Caco-2 (cell line): ENCODE measurements at regions of chr17 and their contacts with region 1.

Region 1: DNA sequence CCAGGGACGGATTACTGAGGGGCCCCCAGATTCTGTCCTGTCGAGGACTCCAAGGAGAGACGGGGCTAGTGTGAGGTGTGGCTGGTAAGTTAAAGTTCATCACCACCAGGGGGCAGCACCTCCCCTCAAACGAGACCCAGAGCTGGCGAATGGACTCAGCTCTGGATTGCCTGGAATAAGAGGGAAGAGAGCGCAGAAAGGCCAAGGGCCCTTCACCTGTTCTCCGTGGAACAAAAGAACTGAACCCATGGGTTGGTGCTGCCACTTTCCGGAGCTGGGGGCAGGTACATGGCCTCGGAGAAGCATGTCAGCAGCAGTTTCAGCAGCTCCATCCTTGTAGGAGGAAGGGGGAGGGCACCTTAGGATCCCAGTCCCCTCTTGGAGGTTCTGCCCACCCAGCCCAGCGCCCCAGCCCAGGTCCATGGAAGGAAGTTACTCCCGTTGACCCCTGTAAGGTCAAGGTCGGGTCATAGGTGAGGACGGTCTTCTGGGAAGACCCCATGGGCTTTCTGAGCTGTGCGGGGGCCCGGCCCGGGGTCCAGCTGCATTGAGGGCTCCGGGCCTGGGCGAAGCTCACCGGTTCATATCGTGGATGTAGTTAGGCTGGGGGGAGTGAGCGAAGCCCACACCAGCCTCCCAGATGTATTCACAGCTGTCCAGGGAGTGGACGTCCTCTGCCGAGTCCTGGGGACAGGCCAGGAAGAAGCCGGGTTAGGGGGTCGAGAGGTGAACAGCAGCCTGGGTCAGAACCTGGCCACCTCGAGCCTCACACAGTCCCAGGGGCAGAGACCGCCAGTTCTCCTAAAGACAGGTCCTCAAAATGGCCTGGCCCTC is 10.7 kb downstream of the HID1 start:
- DNase-seq: peak; percentile 90 to 93
- H3K4me3 ChIP-seq: no peak overlapping the region
- H3K4me3 Mint-ChIP-seq: no peak overlapping the region
- H3K27ac Mint-ChIP-seq: no peak overlapping the region
- H3K4me1 ChIP-seq: 0 out of 2 replicates have a peak, but pooled peaks cover 3% of the 10 kb centered on the region
- H3K4me1 Mint-ChIP-seq: peaks cover 21% of the 10 kb centered on the region
- H3K27me3 ChIP-seq: no peaks in the 10 kb centered on the region
- H3K27me3 Mint-ChIP-seq: no peaks in the 10 kb centered on the region
- CTCF ChIP-seq: peak; percentile 70 to 86

Region 2: DNA sequence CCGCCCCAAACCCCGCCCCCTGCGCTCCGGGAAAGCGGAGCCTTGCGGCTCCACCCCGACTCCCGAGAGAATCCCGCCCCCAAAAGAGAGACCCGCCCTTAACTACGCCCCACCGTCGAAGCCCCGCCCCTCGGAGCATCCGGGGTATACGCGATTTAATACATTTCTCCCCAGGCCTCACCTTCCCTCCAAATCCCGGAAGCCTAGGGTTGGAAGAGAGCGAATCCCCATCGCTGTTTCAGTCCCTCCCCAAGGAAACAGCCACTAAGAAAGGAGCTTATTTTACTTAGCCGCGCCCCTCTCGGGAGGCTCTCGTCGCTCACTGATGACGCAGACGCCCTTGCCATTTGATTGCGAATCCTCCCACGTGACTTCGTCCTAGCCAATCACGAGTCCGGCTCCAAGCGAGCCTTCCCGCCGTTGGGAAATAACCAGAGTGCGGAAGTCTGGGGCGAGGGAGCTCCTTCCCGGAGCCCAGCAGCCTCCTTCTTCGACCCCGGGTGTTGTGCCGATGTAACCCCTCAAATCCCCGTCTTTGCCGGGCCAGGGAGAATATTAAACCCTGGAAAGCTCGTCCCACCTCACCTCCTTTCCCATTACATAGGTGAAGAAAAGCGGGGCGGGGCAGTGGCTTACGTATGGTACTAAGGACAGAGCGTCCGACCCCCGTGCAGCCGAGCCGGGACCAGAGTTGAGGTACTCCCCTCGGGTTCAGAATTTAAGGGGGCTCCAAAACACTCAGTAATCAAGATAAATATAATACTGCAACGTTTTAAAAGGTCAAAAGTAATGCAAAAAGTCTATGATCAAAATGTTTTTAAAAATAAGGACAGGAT is 88.6 kb before region 1 on chr17:
- CTCF ChIA-PET with region 1: interaction called, 27 read pairs
- POLR2A ChIA-PET with region 1: interaction called, 5 read pairs
- intact Hi-C with region 1: no loop called
- DNase-seq: peak; percentile 99 to 100
- H3K4me3 ChIP-seq: peak overlapping the region; percentile 83
- H3K4me3 Mint-ChIP-seq: peak overlapping the region; percentile 84
- H3K27ac Mint-ChIP-seq: peak overlapping the region; percentile 55
- H3K4me1 ChIP-seq: peaks cover 12% of the 10 kb centered on the region
- H3K4me1 Mint-ChIP-seq: peaks cover 21% of the 10 kb centered on the region
- H3K27me3 ChIP-seq: no peaks in the 10 kb centered on the region
- H3K27me3 Mint-ChIP-seq: no peaks in the 10 kb centered on the region
- CTCF ChIP-seq: no peak

Region 3: GRCh38 chr17:74950207-74950606 is 11.7 kb before region 1 on chr17:
- CTCF ChIA-PET with region 1: interaction called, 16 read pairs
- POLR2A ChIA-PET with region 1: interaction called, 3 read pairs
- intact Hi-C with region 1: no loop called
- DNase-seq: peak; percentile 28 to 49
- H3K4me3 ChIP-seq: no peak overlapping the region
- H3K4me3 Mint-ChIP-seq: no peak overlapping the region
- H3K27ac Mint-ChIP-seq: no peak overlapping the region
- H3K4me1 ChIP-seq: peaks cover 8% of the 10 kb centered on the region
- H3K4me1 Mint-ChIP-seq: peaks cover 7% of the 10 kb centered on the region
- H3K27me3 ChIP-seq: no peaks in the 10 kb centered on the region
- H3K27me3 Mint-ChIP-seq: peaks cover 2% of the 10 kb centered on the region
- CTCF ChIP-seq: no peak

Region 4: DNA sequence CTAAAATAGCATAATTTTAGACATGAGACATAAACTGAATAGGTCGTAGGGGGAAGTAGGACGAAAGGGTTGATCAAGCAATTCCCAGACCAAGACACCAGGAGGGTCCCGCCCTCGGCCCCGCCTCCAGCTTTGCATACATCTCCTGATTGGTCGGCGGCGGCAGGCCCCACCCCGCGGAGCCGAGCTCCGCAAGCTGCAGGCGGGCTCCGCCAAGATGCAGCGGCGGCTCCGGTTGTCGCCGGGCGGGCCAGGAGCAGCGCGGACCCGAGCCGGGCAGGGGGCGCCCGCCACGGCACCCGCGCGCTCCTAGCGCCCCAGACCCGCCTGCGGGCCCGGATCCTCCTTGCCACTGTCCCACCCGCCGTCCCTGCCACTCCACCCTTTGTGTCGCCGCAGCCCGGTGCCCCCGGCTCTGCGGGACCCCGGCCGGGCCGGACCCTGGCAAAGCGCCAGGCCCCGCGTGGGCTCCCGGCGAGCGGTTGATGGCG is 25.6 kb after region 1 on chr17 and contains the start of gene CDR2L:
- CTCF ChIA-PET with region 1: interaction called, 29 read pairs
- POLR2A ChIA-PET with region 1: interaction called, 18 read pairs
- intact Hi-C with region 1: loop called (anchors 1 kb)
- DNase-seq: peak; percentile 95 to 98
- H3K4me3 ChIP-seq: peak within 1 kb of the TSS; percentile 70
- H3K4me3 Mint-ChIP-seq: peak within 1 kb of the TSS; percentile 81
- H3K27ac Mint-ChIP-seq: peak within 1 kb of the TSS; percentile 53
- H3K4me1 ChIP-seq: peaks cover 37% of the 10 kb centered on the region
- H3K4me1 Mint-ChIP-seq: peaks cover 23% of the 10 kb centered on the region
- H3K27me3 ChIP-seq: no peaks in the 10 kb centered on the region
- H3K27me3 Mint-ChIP-seq: no peaks in the 10 kb centered on the region
- CTCF ChIP-seq: no peak
- total RNA-seq, gene CDR2L: 30.9 and 31.6 TPM in 2 replicates

Region 5: DNA sequence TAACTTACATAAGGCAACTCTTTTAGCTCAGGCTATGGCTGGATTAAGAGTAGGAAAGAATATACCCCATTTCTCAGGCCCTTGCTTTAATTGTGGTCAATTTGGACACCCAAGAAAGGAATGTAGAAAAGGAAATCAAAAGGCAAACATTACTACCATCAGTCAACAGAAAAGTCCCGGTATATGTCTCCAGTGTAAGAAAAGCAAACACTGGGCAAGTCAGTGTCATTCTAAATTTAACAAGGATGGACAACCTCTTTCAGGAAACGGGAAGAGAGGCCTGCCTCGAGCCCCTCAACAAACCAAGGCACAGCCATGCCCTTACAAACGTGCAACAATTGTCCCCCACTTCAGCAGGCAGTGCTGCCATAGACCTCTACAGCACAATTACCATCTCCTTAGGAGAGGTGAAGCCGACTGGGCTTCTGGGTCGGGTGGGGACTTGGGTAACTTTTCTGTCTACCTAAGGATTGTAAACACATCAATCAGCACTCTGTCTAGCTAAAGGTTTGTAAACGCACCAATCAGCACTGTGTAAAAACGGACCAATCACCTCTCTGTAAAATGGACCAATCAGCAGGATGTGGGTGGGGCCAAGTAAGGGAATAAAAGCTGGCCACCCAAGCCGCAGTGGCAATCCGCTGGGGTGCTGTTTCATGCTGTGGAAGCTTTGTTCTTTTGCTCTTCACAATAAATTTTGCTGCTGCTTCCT is 63.0 kb after region 1 on chr17:
- CTCF ChIA-PET with region 1: interaction called, 10 read pairs
- POLR2A ChIA-PET with region 1: no interaction called
- intact Hi-C with region 1: no loop called
- DNase-seq: no peak
- H3K4me3 ChIP-seq: no peak overlapping the region
- H3K4me3 Mint-ChIP-seq: no peak overlapping the region
- H3K27ac Mint-ChIP-seq: no peak overlapping the region
- H3K4me1 ChIP-seq: no peaks in the 10 kb centered on the region
- H3K4me1 Mint-ChIP-seq: no peaks in the 10 kb centered on the region
- H3K27me3 ChIP-seq: no peaks in the 10 kb centered on the region
- H3K27me3 Mint-ChIP-seq: no peaks in the 10 kb centered on the region
- CTCF ChIP-seq: no peak

Region 6: GRCh38 chr17:75205037-75205792 is 243.3 kb after region 1 on chr17 and contains the start of gene NUP85:
- CTCF ChIA-PET with region 1: interaction called, 10 read pairs
- POLR2A ChIA-PET with region 1: no interaction called
- intact Hi-C with region 1: no loop called
- DNase-seq: peak; percentile 98
- H3K4me3 ChIP-seq: peak within 1 kb of the TSS; percentile 92
- H3K4me3 Mint-ChIP-seq: peak within 1 kb of the TSS; percentile 87
- H3K27ac Mint-ChIP-seq: peak within 1 kb of the TSS; percentile 100
- H3K4me1 ChIP-seq: peaks cover 11% of the 10 kb centered on the region; the same call in 1 of the 2 replicates
- H3K4me1 Mint-ChIP-seq: peaks cover 6% of the 10 kb centered on the region
- H3K27me3 ChIP-seq: no peaks in the 10 kb centered on the region
- H3K27me3 Mint-ChIP-seq: no peaks in the 10 kb centered on the region
- CTCF ChIP-seq: no peak
- total RNA-seq, gene NUP85: 119 and 142 TPM in 2 replicates